AG04450 (cell line): ENCODE measurements at regions of chr14 and their contacts with region 1.

Region 1: DNA sequence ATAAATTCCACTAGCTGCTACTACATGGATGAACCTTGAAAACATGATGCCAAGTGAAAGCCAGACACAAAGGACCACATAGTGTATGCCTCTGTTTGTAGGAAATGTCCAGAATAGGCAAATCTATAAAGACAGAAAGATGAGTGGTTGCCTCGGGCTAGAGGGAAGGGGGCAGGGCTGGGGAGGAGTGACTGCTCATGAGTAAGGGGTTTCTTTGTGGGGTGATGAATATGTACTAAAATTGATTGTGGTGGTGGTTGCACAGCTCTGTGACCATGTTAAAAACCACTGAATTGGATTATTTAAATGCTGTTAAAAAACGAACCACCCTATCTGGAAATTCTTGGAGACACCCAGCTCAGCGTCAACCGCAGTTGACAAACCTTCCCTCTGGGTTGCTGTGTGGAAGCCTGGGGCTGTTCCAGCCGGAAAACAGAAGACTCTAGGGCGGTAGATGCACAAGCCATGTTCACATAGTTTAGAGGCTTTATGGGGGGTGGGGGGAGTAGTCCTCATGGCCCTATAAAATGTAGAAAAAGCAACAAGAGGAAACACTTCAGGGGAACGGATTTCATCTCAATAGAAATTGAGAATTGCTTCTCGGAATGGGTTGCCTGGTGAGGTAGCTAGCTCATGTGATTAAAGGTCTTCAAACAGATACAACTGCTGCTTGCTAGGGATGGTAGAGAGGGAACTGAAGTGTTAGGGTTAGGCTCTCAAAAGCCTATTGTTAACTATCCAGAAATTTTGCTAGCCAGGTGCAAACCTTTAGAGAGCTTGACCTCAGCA is 29.4 kb downstream of the RIN3 start:
- DNase-seq: no peak
- H3K4me3 ChIP-seq: no peak overlapping the region
- H3K27ac ChIP-seq: no peak overlapping the region
- H3K27me3 ChIP-seq: no peaks in the 10 kb centered on the region
- CTCF ChIP-seq: no peak

Region 2: DNA sequence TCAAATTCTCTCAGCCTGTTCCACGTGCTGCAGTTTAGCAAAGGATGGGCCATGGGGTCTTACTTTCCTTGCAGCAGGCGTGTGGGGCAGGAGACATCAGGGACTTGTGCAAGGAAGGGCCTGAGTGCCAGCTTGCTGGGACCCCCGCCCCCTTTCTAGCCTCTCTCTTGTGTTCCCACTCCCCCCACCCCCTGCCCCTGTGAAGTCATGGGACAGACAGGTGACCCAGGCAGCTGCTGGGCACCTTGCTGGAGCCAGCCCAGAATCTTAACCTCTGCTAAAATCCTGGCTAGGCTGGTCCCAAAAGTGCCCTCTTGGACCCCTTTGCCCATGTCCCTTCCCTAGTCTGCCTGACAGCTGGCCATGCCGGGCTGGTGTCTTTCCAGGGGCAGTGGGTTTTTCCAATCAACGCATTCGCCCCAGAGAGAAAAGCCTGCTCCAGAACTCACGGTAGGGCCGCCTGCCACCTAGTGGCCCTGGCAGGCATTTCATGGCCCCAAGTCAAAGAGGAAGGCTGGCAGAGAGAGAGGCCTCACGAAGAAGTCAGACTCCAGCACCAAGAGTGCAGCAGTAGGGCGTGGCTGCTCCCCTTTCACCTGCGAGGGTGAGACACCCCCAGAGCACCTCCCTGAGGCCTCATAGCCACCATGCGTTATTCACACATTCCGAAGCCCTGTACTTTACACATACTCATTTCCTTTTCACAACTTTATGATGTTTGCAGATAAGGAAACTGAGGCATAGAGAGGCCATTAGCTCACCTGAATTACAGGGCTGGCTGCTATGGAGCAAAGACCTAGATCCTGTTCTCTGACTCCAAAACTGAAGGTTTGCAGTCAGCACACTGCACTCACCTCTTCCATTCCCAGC is 138.1 kb after region 1 on chr14:
- CTCF ChIA-PET with region 1: interaction called, 10 read pairs
- POLR2A ChIA-PET with region 1: no interaction called
- DNase-seq: peak; percentile 45
- H3K4me3 ChIP-seq: no peak overlapping the region
- H3K27ac ChIP-seq: peak overlapping the region; percentile 21
- H3K27me3 ChIP-seq: no peaks in the 10 kb centered on the region
- CTCF ChIP-seq: peak; percentile 98